Left lung (tissue), 14 donors: ENCODE measurements at regions of chr2 and their contacts with region 1.

Region 1: DNA sequence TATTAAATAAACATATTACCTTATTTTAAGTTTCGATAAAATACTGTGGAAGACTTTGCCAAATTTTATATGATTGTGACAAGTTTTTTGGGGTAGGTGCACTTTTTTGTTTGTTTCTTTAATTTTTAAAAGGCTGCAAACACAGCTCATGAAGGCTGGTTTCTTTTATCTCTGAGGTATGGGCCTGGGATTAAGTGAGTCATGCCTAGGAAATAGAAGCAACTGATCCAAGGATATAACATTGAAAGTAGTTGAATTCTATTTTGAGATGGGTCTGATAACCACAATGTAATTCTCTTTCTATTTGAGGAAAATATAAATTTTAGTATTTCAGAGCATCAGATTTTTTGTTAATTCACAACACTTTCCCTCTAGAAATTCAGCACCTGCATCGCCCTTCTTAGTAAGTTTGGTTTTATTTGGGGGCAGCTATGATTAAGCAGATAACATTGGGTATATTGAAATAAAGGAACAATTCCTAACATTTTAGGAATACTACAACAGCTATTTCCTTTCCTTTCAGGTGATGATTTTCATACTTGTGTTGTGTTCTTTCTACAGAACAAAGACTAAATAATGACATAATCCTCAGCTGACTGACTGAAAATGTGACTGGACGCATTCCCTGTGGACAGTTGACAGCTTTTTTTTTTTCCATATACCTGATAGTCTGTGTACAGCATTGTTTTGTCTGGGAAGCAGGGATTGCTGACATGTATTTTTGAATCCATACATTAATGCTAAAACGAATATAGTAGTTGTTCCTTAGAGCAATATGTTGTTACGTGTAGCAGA is 16.8 kb downstream of the RBM45 start:
- DNase-seq: no peak
- ATAC-seq: no peak
- H3K4me3 ChIP-seq: no peak overlapping the region
- H3K27ac ChIP-seq: no peak overlapping the region
- H3K4me1 ChIP-seq: no peaks in the 10 kb centered on the region
- H3K27me3 ChIP-seq: no peaks in the 10 kb centered on the region
- CTCF ChIP-seq: no peak

Region 2: DNA sequence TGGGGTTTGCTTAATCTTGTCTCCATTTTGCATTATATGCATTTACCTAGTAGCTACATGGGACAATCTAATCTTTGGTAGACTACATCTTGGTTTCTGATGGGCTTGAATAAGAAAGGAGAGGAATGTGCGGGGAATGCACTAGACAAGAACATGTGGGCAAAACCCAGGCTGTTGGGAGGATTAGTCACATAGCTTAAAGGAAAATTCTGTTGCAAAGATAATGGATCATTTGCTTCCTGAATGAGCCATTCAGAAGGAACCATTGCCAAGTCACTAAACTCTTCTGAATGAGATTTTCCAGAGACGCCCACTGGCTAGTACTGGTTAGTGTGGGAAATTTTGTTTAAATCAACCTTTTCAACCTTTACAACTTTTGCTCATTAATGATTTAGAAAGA is 150.1 kb after region 1 on chr2:
- intact Hi-C with region 1: loop called in 1 of 2 experiments (anchors 5 kb)
- DNase-seq: no peak
- ATAC-seq: no peak
- H3K4me3 ChIP-seq: no peak overlapping the region
- H3K27ac ChIP-seq: no peak overlapping the region
- H3K4me1 ChIP-seq: no peaks in the 10 kb centered on the region
- H3K27me3 ChIP-seq: no peaks in the 10 kb centered on the region
- CTCF ChIP-seq: no peak

Region 3: GRCh38 chr2:178441426-178441825 is 312.4 kb after region 1 on chr2:
- intact Hi-C with region 1: no loop called
- DNase-seq: no peak
- ATAC-seq: no peak
- H3K4me3 ChIP-seq: no peak overlapping the region
- H3K27ac ChIP-seq: no peak overlapping the region
- H3K4me1 ChIP-seq: no peaks in the 10 kb centered on the region
- H3K27me3 ChIP-seq: no peaks in the 10 kb centered on the region
- CTCF ChIP-seq: no peak